ENCODE measurements at regions of chr15 and their contacts with region 1.

Region 1: DNA sequence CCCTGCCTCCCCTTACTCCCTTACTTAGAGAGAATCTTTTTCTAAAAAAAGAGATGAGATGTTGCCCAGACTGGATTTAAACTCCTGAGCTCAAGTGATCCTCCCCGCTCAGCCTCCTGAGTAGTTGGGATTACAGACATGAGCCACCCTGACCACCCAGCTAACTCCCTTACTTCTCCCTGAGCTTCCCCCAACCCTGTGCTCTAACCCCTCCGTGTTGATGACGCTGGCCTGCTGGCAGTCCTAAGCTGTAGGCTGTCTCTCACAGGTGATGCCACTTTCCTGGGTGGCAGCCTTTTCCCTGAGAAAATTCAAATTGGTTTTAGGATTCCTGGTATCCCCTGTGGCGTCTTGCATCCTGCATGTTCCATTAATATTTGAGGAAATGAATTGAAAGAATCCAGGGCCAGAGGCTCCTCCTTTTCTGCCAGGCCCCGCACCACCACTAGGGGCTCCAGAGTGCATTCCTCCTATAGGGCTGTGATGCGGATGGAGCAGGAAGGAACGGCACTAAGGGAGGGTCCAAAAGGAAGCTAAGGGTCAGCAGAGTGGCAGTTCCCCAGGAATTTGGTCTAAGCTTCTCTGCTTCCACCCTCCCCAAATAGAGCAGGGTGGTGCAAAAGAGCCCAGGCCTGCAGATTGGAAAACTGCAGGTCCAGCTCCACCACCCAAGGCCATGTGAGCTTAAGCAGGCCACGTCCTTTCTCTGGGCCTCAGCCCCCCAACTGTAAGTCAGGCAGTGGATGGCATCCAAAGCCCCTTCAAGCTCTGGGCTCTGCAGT is 101.1 kb downstream of the DAPK2 start:
- DNase-seq: peak; percentile 84
- H3K4me3 ChIP-seq: no peak overlapping the region; a peak in 1 of 4 replicates
- H3K27ac ChIP-seq: no peak overlapping the region
- H3K4me1 ChIP-seq: peaks cover 0 to 12% of the 10 kb centered on the region in 2 experiments; a peak in 1 of 4 replicates
- H3K27me3 ChIP-seq: no peaks in the 10 kb centered on the region
- CTCF ChIP-seq: peak; percentile 92
- EP300 ChIP-seq: no peak
- RAD21 ChIP-seq: peak; percentile 58

Region 2: DNA sequence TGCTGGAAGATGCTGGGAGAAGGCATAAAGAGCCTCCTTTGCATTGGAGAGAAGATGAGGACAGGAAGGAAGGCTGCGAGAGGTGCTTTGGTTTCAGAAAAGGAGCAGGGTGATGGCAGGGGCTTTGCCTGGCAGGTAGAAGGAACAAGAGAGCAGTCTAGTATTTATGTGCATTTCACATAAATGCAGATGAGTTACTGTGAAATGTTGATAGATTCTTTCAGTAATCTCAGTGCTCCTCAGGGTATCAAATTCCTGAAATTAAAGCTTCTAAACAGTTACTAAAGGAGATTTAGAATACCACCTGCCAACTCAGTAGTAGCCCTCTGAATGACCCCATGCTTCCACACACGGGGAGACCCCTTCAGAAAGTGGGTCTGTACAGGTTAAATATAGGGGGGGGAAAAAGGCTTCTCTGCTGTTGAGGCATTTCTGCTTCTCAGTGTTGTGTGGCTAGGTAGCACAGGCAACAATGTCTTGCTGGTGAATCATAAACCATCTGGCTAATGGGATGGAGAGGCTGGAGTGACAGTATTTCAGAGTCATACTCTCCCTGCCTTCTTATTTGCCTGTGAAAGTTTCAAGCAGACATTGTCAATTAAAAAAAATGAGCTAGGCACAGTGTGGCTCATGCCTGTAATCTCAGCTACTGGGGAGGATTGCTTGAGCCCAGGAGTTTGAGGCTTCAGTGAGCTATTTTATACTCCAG is 362.3 kb before region 1 on chr15:
- CTCF ChIA-PET with region 1: no interaction called
- POLR2A ChIA-PET with region 1: no interaction called
- DNase-seq: no peak
- H3K4me3 ChIP-seq: no peak overlapping the region
- H3K27ac ChIP-seq: peak overlapping the region in 1 of 2 experiments; percentile 62; a peak in 2 of 4 replicates
- H3K4me1 ChIP-seq: peaks cover 0 to 10% of the 10 kb centered on the region in 2 experiments; a peak in 3 of 4 replicates
- H3K27me3 ChIP-seq: no peaks in the 10 kb centered on the region
- CTCF ChIP-seq: no peak
- EP300 ChIP-seq: no peak
- RAD21 ChIP-seq: no peak

Region 3: GRCh38 chr15:63913786-63914315 is 31.3 kb before region 1 on chr15:
- CTCF ChIA-PET with region 1: interaction called, 29 read pairs
- POLR2A ChIA-PET with region 1: no interaction called
- DNase-seq: no peak
- H3K4me3 ChIP-seq: no peak overlapping the region
- H3K27ac ChIP-seq: no peak overlapping the region
- H3K4me1 ChIP-seq: peaks cover 18 to 29% of the 10 kb centered on the region in 2 experiments; a peak in 3 of 4 replicates
- H3K27me3 ChIP-seq: no peaks in the 10 kb centered on the region
- CTCF ChIP-seq: no peak
- EP300 ChIP-seq: no peak
- RAD21 ChIP-seq: no peak

Region 4: DNA sequence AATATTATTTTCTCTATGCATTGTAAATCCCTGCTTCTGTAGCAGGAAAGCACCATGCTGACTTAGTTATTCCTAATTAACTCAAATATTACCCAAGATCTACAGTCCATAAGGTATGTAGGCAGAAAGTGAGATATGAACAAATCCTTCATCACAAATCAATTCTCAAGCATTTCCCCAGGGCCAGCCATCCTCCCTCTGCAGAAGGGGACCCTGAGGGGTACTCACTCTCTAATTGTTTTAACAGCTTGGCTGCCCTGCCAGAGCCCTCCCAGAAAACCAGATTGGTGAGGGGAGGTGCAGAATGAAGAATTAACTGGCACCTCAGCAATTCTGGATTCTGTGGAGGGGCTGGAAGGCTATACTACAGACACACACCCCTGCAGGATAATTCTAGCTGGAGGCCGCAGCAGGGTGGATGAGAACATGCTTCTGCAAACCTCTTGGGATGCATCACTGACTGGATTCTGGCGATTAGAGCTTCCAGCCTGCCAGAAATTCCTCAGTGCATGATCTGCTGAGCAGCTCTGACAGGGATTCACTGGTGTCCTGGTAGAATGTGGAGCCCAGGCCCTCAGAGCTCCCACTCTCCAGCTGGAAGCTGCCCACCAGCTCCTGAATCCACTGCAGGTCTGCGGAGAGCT is 22.8 kb before region 1 on chr15:
- CTCF ChIA-PET with region 1: interaction called, 29 read pairs
- POLR2A ChIA-PET with region 1: no interaction called
- DNase-seq: no peak
- H3K4me3 ChIP-seq: no peak overlapping the region
- H3K27ac ChIP-seq: no peak overlapping the region
- H3K4me1 ChIP-seq: peaks cover 0 to 9% of the 10 kb centered on the region in 2 experiments; a peak in 1 of 4 replicates
- H3K27me3 ChIP-seq: no peaks in the 10 kb centered on the region
- CTCF ChIP-seq: no peak
- EP300 ChIP-seq: no peak
- RAD21 ChIP-seq: no peak

Region 5: DNA sequence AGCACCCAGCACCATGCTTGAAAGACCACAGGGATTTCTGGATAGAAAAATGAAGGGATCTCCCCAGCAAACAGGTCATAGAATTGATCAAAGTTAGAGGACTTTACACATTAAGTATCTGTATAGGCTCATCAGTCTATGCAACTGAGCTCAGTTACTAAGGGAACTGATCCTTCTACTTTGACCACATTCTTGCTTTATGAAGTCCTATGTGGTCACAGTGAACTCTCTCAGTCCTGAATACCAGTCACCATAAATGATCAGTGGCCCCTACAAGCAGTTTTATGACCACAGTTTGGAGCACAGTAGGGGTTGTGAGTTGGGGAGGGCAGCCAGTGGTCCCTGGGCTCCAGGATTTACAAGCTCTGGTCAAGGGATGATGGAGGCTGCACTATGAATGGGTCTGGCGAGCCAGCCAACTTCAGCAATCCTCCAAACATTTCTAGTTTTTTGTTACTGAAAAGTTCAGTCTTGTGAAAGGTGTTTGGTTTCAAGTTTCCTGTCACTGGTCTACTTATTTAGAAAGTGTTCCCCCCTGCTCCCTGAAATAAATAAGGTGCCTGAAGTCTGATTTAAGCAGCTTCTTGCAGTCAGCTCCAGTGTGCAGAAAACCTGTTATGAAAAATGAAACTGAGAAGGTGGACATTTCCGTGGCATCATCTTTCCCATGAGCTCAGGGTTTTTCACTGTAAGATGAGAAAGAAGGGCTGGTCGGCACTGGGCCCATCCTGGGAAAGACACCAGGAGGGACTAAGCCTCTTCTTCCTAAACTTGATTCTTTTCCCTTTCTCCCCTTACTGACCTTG is 25.6 kb after region 1 on chr15:
- CTCF ChIA-PET with region 1: interaction called, 25 read pairs
- POLR2A ChIA-PET with region 1: no interaction called
- DNase-seq: no peak
- H3K4me3 ChIP-seq: no peak overlapping the region
- H3K27ac ChIP-seq: no peak overlapping the region
- H3K4me1 ChIP-seq: peaks cover 2 to 5% of the 10 kb centered on the region in 2 experiments; a peak in 2 of 4 replicates
- H3K27me3 ChIP-seq: no peaks in the 10 kb centered on the region
- CTCF ChIP-seq: no peak
- EP300 ChIP-seq: no peak
- RAD21 ChIP-seq: no peak

Region 6: GRCh38 chr15:64038878-64039610 is 93.8 kb after region 1 on chr15:
- CTCF ChIA-PET with region 1: interaction called, 17 read pairs
- POLR2A ChIA-PET with region 1: no interaction called
- DNase-seq: no peak
- H3K4me3 ChIP-seq: no peak overlapping the region
- H3K27ac ChIP-seq: no peak overlapping the region
- H3K4me1 ChIP-seq: peaks cover 0 to 5% of the 10 kb centered on the region in 2 experiments; a peak in 1 of 4 replicates
- H3K27me3 ChIP-seq: no peaks in the 10 kb centered on the region
- CTCF ChIP-seq: no peak
- EP300 ChIP-seq: no peak
- RAD21 ChIP-seq: no peak

Region 7: GRCh38 chr15:64046347-64047153 is 101.4 kb after region 1 on chr15 and contains the start of gene DAPK2:
- CTCF ChIA-PET with region 1: interaction called, 24 read pairs
- POLR2A ChIA-PET with region 1: no interaction called
- DNase-seq: peak; percentile 97
- H3K4me3 ChIP-seq: peak within 1 kb of the TSS; percentile 61 to 64
- H3K27ac ChIP-seq: no peak within 1 kb of the TSS; a peak in 1 of 4 replicates
- H3K4me1 ChIP-seq: peaks cover 0 to 13% of the 10 kb centered on the region in 2 experiments; a peak in 1 of 4 replicates
- H3K27me3 ChIP-seq: no peaks in the 10 kb centered on the region
- CTCF ChIP-seq: peak; percentile 77
- EP300 ChIP-seq: no peak
- RAD21 ChIP-seq: peak; percentile 50
- polyA plus RNA-seq, gene DAPK2: 1.2 and 1.4 TPM in 2 replicates

Region 8: DNA sequence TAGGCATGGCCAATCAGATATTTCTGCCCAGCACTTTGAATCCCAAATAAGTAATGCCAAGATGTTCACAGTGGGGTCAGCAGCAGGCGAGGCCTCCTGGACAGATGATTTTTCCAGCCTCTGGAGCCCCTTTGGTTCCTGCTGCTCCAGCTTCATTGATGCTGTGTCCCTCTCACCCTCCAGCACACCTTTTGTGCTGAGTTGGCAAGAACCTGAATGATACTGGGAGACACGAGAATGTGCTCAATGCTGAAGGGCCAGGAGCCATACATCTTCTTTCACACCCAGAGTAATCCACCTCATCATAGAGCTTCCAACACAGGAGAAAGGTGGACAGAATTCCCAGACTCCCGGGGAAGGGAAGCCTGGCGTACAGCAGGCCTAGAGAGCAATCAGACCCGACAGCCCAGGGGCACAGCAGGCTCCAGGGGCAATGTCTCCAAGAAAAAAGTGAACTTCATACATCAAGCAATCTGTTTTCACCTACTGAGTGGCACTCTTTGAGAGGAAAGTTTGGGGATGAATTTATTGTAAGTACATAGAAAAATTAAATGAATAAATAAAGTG is 107.8 kb after region 1 on chr15:
- CTCF ChIA-PET with region 1: interaction called, 11 read pairs
- POLR2A ChIA-PET with region 1: no interaction called
- DNase-seq: no peak
- H3K4me3 ChIP-seq: no peak overlapping the region
- H3K27ac ChIP-seq: no peak overlapping the region
- H3K4me1 ChIP-seq: peaks cover 0 to 3% of the 10 kb centered on the region in 2 experiments; a peak in 1 of 4 replicates
- H3K27me3 ChIP-seq: no peaks in the 10 kb centered on the region
- CTCF ChIP-seq: no peak
- EP300 ChIP-seq: no peak
- RAD21 ChIP-seq: no peak

Region 9: GRCh38 chr15:64137226-64138220 is 192.3 kb after region 1 on chr15:
- CTCF ChIA-PET with region 1: no interaction called
- POLR2A ChIA-PET with region 1: no interaction called
- DNase-seq: no peak
- H3K4me3 ChIP-seq: no peak overlapping the region
- H3K27ac ChIP-seq: no peak overlapping the region
- H3K4me1 ChIP-seq: peaks cover 0 to 4% of the 10 kb centered on the region in 2 experiments; a peak in 1 of 4 replicates
- H3K27me3 ChIP-seq: no peaks in the 10 kb centered on the region
- CTCF ChIP-seq: no peak
- EP300 ChIP-seq: no peak
- RAD21 ChIP-seq: peak; percentile 25

Measured in SK-N-SH (cell line).